ENCODE measurements at regions of chr2 and their contacts with region 1.

Region 1: GRCh38 chr2:102473020-102473419 is at the start of gene SLC9A4:
- DNase-seq: peak; percentile 85
- H3K4me3 Mint-ChIP-seq: no peak within 1 kb of the TSS
- H3K27ac Mint-ChIP-seq: no peak within 1 kb of the TSS
- H3K4me1 Mint-ChIP-seq: no peaks in the 10 kb centered on the region
- H3K27me3 Mint-ChIP-seq: peaks cover 47% of the 10 kb centered on the region
- total RNA-seq, gene SLC9A4: 0.07 and 0.12 TPM in 2 replicates

Region 2: DNA sequence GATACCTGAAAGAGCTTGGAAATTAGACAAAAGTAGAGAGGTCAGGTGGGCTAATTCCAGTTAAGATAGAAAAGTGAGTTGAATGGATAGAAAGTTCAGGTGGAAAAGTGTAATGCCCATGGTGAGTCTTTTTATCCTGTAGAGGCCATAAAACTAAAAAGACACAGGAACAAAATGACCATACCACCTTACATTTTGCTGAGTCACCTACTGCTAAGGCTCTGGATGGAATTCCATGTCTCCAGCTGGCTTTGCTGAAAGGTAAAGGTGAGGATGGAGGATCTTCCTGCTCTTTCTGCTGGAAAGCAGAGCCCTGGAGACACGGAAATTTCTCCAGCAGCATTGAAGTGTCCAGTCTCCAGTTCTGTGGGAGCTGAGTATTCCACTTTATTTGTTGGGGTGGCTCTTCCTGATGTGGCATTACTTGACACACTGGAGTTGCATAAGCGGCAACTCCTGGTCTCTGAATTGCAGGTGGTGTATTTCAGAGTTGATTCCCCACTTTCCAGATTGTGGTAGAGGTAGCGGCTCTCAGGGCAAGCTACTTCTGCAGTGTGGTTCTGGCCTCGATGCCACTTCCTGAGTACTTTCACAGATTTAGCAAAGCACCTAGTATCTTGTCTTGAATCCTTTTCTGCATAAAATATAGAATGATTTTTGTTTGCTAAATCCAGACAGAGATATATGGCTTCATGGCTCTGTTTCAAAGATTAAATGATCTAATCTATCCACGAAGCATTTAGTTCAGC is 275.5 kb before region 1 on chr2:
- intact Hi-C with region 1: no loop called
- DNase-seq: no peak
- H3K4me3 Mint-ChIP-seq: no peak overlapping the region
- H3K27ac Mint-ChIP-seq: no peak overlapping the region
- H3K4me1 Mint-ChIP-seq: peaks cover 5% of the 10 kb centered on the region
- H3K27me3 Mint-ChIP-seq: peaks cover 10% of the 10 kb centered on the region

Region 3: GRCh38 chr2:102592597-102592996 is 119.6 kb after region 1 on chr2:
- intact Hi-C with region 1: loop called (anchors 2 kb)
- DNase-seq: peak; percentile 68
- H3K4me3 Mint-ChIP-seq: no peak overlapping the region
- H3K27ac Mint-ChIP-seq: no peak overlapping the region
- H3K4me1 Mint-ChIP-seq: no peaks in the 10 kb centered on the region
- H3K27me3 Mint-ChIP-seq: peaks cover 15% of the 10 kb centered on the region

Region 4: GRCh38 chr2:102615622-102616436 is 142.8 kb after region 1 on chr2:
- intact Hi-C with region 1: loop called (anchors 1 kb)
- DNase-seq: peak; percentile 81
- H3K4me3 Mint-ChIP-seq: no peak overlapping the region
- H3K27ac Mint-ChIP-seq: no peak overlapping the region
- H3K4me1 Mint-ChIP-seq: peaks cover 11% of the 10 kb centered on the region
- H3K27me3 Mint-ChIP-seq: peaks cover 60% of the 10 kb centered on the region

Region 5: GRCh38 chr2:102664471-102664909 is 191.5 kb after region 1 on chr2:
- intact Hi-C with region 1: no loop called
- DNase-seq: peak; percentile 76
- H3K4me3 Mint-ChIP-seq: peak overlapping the region; percentile 4
- H3K27ac Mint-ChIP-seq: peak overlapping the region; percentile 71
- H3K4me1 Mint-ChIP-seq: peaks cover 14% of the 10 kb centered on the region
- H3K27me3 Mint-ChIP-seq: no peaks in the 10 kb centered on the region

Region 6: DNA sequence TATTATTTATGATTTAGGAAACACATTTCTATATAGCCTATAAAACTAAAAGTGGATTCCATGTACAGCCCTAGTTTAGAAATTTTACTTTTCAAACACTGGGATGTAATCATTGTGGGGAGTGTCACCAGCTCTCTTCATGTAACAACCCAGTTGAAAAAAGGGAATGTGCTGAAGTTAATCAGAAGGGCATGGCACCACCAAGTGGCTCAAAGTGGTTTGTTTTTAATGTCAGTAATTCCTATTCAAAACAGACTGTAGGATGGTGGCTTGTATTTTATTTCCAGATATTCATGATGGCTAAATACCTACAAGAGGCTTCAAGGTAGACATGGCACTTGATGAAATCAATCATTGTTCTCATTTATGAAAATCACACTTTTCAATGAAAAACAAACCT is 230.7 kb after region 1 on chr2:
- intact Hi-C with region 1: loop called (anchors 5 kb)
- DNase-seq: no peak
- H3K4me3 Mint-ChIP-seq: no peak overlapping the region
- H3K27ac Mint-ChIP-seq: no peak overlapping the region
- H3K4me1 Mint-ChIP-seq: peaks cover 2% of the 10 kb centered on the region
- H3K27me3 Mint-ChIP-seq: peaks cover 14% of the 10 kb centered on the region

Region 7: GRCh38 chr2:102806250-102806837 is 333.3 kb after region 1 on chr2:
- intact Hi-C with region 1: loop called (anchors 10 kb)
- DNase-seq: peak; percentile 83
- H3K4me3 Mint-ChIP-seq: no peak overlapping the region
- H3K27ac Mint-ChIP-seq: no peak overlapping the region
- H3K4me1 Mint-ChIP-seq: peaks cover 12% of the 10 kb centered on the region
- H3K27me3 Mint-ChIP-seq: peaks cover 6% of the 10 kb centered on the region

Measured in activated CD4-positive, alpha-beta T cell treated with anti-CD3 and anti-CD28 coated beads, Interleukin-2, amount 10 ng/mL, durations not matched to agents 24 days and 14 days (primary cell).